ENCODE measurements at regions of chr9 and their contacts with region 1.

Region 1: DNA sequence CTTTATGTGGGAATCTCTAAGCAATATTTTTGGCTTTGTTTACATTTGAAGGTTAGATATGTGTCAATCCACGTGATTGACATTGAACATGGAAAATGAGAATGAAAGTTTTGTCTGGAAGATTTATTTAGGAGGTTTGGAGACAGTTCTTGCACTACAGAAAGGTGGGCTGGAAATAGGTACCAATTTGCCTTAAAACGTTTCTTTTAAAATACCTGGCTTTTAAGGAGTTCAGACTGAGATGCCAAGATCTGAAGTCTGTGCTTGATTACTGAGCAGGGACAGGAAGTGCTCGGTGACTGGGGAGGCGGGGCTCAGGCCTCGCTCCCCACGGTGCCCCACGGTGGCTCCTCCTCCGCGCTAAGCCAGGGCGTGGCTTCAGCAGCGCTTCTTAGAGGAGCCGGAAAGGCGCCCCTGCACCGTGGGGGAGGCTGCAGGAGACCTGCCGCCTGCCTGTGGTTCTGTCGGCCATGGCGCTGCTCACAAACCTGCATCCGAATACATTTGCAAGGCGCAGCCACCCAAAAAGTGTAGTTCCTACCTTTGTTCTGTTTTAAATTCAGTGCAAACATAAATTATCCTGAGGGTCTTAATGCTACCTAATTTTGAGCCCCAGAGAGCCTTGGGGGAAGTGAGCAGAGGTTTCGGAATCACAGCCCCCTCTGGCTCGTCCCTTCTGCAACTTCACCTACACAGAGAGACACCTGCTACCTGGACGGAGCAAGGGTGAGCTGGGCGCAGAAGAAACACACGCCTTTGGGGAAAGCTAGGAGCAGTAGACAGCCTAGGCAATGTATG is 49.2 kb downstream of the USP20 start:
- DNase-seq: peak; percentile 95
- ATAC-seq: peak; percentile 57
- H3K4me3 ChIP-seq: peak overlapping the region; percentile 39 to 81 (median 65)
- H3K4me3 Mint-ChIP-seq: peak overlapping the region; percentile 95
- H3K27ac ChIP-seq: peak overlapping the region; percentile 75 to 90
- H3K27ac Mint-ChIP-seq: peak overlapping the region; percentile 97
- H3K4me1 ChIP-seq: peaks cover 48 to 58% of the 10 kb centered on the region in 2 donors
- H3K4me1 Mint-ChIP-seq: peaks cover 58% of the 10 kb centered on the region
- H3K27me3 ChIP-seq: no peaks in the 10 kb centered on the region
- H3K27me3 Mint-ChIP-seq: no peaks in the 10 kb centered on the region
- CTCF ChIP-seq: peak; percentile 29

Region 2: GRCh38 chr9:129823935-129824601 is 60.4 kb before region 1 on chr9 and contains the start of gene TOR1A:
- CTCF ChIA-PET with region 1: no interaction called
- POLR2A ChIA-PET with region 1: no interaction called
- intact Hi-C with region 1: no loop called
- DNase-seq: peak; percentile 95
- ATAC-seq: peak; percentile 92
- H3K4me3 ChIP-seq: peak within 1 kb of the TSS in 4 of 5 experiments; percentile 49 to 83 (median 76)
- H3K4me3 Mint-ChIP-seq: peak within 1 kb of the TSS; percentile 86
- H3K27ac ChIP-seq: peak within 1 kb of the TSS in 1 of 2 donors; percentile 68
- H3K27ac Mint-ChIP-seq: peak within 1 kb of the TSS; percentile 81
- H3K4me1 ChIP-seq: peaks cover 7 to 8% of the 10 kb centered on the region in 2 donors
- H3K4me1 Mint-ChIP-seq: peaks cover 16% of the 10 kb centered on the region
- H3K27me3 ChIP-seq: no peaks in the 10 kb centered on the region
- H3K27me3 Mint-ChIP-seq: no peaks in the 10 kb centered on the region
- CTCF ChIP-seq: no peak
- total RNA-seq, gene TOR1A: 30.3 and 35.3 TPM in 2 replicates

Region 3: GRCh38 chr9:129900263-129901027 is 16.0 kb after region 1 on chr9:
- CTCF ChIA-PET with region 1: interaction called, 18 read pairs
- POLR2A ChIA-PET with region 1: interaction called, 4 read pairs
- intact Hi-C with region 1: loop called (anchors 1 kb)
- DNase-seq: peak; percentile 67
- ATAC-seq: peak; percentile 87
- H3K4me3 ChIP-seq: no peak overlapping the region
- H3K4me3 Mint-ChIP-seq: peak overlapping the region; percentile 37
- H3K27ac ChIP-seq: peak overlapping the region; percentile 56 to 64
- H3K27ac Mint-ChIP-seq: peak overlapping the region; percentile 82
- H3K4me1 ChIP-seq: peaks cover 15 to 27% of the 10 kb centered on the region in 2 donors
- H3K4me1 Mint-ChIP-seq: peaks cover 47% of the 10 kb centered on the region
- H3K27me3 ChIP-seq: no peaks in the 10 kb centered on the region
- H3K27me3 Mint-ChIP-seq: no peaks in the 10 kb centered on the region
- CTCF ChIP-seq: no peak

Region 4: GRCh38 chr9:129932303-129933151 is 48.1 kb after region 1 on chr9:
- CTCF ChIA-PET with region 1: interaction called, 6 read pairs
- POLR2A ChIA-PET with region 1: no interaction called
- intact Hi-C with region 1: loop called (anchors 5 kb)
- DNase-seq: peak; percentile 29
- ATAC-seq: no peak
- H3K4me3 ChIP-seq: peak overlapping the region in 1 of 5 experiments; percentile 23
- H3K4me3 Mint-ChIP-seq: peak overlapping the region; percentile 50
- H3K27ac ChIP-seq: peak overlapping the region in 1 of 2 donors; percentile 63
- H3K27ac Mint-ChIP-seq: peak overlapping the region; percentile 83
- H3K4me1 ChIP-seq: peaks cover 14 to 31% of the 10 kb centered on the region in 2 donors
- H3K4me1 Mint-ChIP-seq: peaks cover 34% of the 10 kb centered on the region
- H3K27me3 ChIP-seq: no peaks in the 10 kb centered on the region
- H3K27me3 Mint-ChIP-seq: no peaks in the 10 kb centered on the region
- CTCF ChIP-seq: no peak

Region 5: DNA sequence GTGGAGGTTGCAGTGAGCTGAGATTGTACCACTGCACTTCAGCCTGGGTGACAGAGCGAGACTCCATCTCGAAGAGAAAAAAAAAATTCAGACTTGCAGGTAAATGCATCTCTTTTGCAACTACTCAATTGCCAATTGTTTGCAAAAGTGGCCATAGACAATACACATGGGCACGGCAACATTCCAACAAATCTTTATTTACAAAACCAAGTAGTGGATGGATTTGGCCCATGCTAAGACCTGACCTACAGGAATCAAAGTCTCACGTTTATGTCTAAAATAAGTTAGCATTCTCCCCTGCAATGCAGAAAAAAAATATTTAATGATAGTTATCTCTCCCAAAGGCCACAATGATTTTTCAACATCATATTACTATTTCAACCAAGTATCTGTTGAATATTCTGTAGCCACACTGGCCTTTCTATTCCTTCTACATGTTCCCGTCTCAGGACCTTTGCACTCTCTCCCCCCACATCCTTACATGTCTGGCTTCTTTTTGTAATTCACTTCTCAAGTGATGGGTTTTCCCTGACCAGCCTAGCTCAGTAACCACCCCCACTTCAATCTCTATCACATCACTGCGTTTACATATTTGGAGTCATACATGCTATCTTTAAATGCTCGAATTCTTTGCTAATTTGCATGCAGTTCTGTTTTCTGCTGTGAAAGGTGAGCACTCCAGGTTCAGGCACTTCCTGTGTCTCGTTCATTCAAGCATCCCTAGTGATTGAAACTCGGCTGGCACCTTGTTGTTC is 104.4 kb after region 1 on chr9:
- CTCF ChIA-PET with region 1: interaction called, 6 read pairs
- POLR2A ChIA-PET with region 1: interaction called, 9 read pairs
- intact Hi-C with region 1: loop called (anchors 1 kb)
- DNase-seq: peak; percentile 92
- ATAC-seq: peak; percentile 74
- H3K4me3 ChIP-seq: peak overlapping the region in 1 of 5 experiments; percentile 45
- H3K4me3 Mint-ChIP-seq: peak overlapping the region; percentile 76
- H3K27ac ChIP-seq: peak overlapping the region; percentile 92
- H3K27ac Mint-ChIP-seq: peak overlapping the region; percentile 93
- H3K4me1 ChIP-seq: peaks cover 77 to 90% of the 10 kb centered on the region in 2 donors
- H3K4me1 Mint-ChIP-seq: peaks cover 71% of the 10 kb centered on the region
- H3K27me3 ChIP-seq: no peaks in the 10 kb centered on the region
- H3K27me3 Mint-ChIP-seq: no peaks in the 10 kb centered on the region
- CTCF ChIP-seq: no peak

Region 6: GRCh38 chr9:130042833-130043653 is 158.6 kb after region 1 on chr9 and contains the start of gene FNBP1:
- CTCF ChIA-PET with region 1: interaction called, 7 read pairs
- POLR2A ChIA-PET with region 1: interaction called, 18 read pairs
- intact Hi-C with region 1: loop called (anchors 1 kb)
- DNase-seq: peak; percentile 88
- ATAC-seq: peak; percentile 76
- H3K4me3 ChIP-seq: peak within 1 kb of the TSS; percentile 74 to 97 (median 95)
- H3K4me3 Mint-ChIP-seq: peak within 1 kb of the TSS; percentile 100
- H3K27ac ChIP-seq: peak within 1 kb of the TSS; percentile 81 to 93
- H3K27ac Mint-ChIP-seq: peak within 1 kb of the TSS; percentile 98
- H3K4me1 ChIP-seq: peaks cover 51 to 62% of the 10 kb centered on the region in 2 donors
- H3K4me1 Mint-ChIP-seq: peaks cover 63% of the 10 kb centered on the region
- H3K27me3 ChIP-seq: no peaks in the 10 kb centered on the region
- H3K27me3 Mint-ChIP-seq: no peaks in the 10 kb centered on the region
- CTCF ChIP-seq: no peak
- total RNA-seq, gene FNBP1: 318 and 337 TPM in 2 replicates

Region 7: GRCh38 chr9:130101915-130102314 is 217.5 kb after region 1 on chr9:
- CTCF ChIA-PET with region 1: interaction called, 23 read pairs
- POLR2A ChIA-PET with region 1: interaction called, 9 read pairs
- intact Hi-C with region 1: loop called (anchors 2 kb)
- DNase-seq: no peak
- ATAC-seq: no peak
- H3K4me3 ChIP-seq: no peak overlapping the region
- H3K4me3 Mint-ChIP-seq: no peak overlapping the region
- H3K27ac ChIP-seq: no peak overlapping the region
- H3K27ac Mint-ChIP-seq: no peak overlapping the region
- H3K4me1 ChIP-seq: peaks cover 0 to 5% of the 10 kb centered on the region in 2 donors
- H3K4me1 Mint-ChIP-seq: peaks cover 10% of the 10 kb centered on the region
- H3K27me3 ChIP-seq: no peaks in the 10 kb centered on the region
- H3K27me3 Mint-ChIP-seq: no peaks in the 10 kb centered on the region
- CTCF ChIP-seq: no peak

Region 8: GRCh38 chr9:130243015-130243734 is 358.8 kb after region 1 on chr9:
- CTCF ChIA-PET with region 1: interaction called, 5 read pairs
- POLR2A ChIA-PET with region 1: no interaction called
- intact Hi-C with region 1: loop called (anchors 5 kb)
- DNase-seq: peak; percentile 79
- ATAC-seq: peak; percentile 55
- H3K4me3 ChIP-seq: peak overlapping the region in 1 of 5 experiments; percentile 21
- H3K4me3 Mint-ChIP-seq: peak overlapping the region; percentile 44
- H3K27ac ChIP-seq: no peak overlapping the region
- H3K27ac Mint-ChIP-seq: no peak overlapping the region
- H3K4me1 ChIP-seq: peaks cover 24 to 29% of the 10 kb centered on the region in 2 donors
- H3K4me1 Mint-ChIP-seq: peaks cover 29% of the 10 kb centered on the region
- H3K27me3 ChIP-seq: peaks cover 0 to 5% (median 0%) of the 10 kb centered on the region in 4 experiments
- H3K27me3 Mint-ChIP-seq: peaks cover 11% of the 10 kb centered on the region
- CTCF ChIP-seq: peak; percentile 89